ENCODE measurements at regions of chr11 and their contacts with region 1.

Region 1: DNA sequence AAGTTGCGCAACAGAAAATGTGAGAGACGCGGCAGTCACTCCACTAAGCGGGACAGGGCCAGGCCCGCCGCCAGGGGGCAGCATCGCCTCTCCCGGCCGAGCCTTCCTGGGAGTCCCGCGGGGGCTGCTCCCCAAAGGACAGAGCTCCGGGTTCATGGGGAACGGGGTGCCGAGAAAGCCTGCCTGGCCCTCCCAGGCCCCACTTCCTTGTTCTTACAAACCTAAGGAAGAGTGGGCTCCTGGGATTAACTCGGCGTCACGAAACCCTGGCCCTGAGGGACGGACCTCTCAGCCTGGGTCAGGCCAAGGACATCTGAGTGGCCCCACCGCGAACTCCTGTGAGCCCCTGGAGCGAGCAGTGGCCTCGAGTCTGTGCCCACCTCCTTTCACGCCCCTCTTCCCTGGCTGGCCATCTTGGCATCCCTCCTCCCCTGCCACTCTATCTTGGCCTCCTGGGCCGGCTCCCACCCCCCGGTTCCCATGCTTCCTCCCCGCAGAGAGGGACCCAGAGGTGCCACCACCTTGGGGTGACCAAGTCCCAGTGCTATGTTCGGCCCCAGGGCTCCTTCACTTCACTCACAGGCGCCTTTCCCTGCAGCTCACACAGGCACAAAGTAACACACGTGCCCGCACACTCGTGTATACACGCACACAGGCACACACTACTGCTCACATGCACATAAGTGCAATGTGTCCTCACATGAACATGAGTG is 99.9 kb upstream of the FGF3 start:
- DNase-seq: peak; percentile 86
- H3K4me3 ChIP-seq: no peak overlapping the region
- H3K27ac ChIP-seq: peak overlapping the region in 1 of 4 donors; percentile 10
- H3K4me1 ChIP-seq: peaks cover 0 to 24% (median 14%) of the 10 kb centered on the region in 4 donors
- H3K27me3 ChIP-seq: peaks cover 0 to 49% (median 0%) of the 10 kb centered on the region in 3 donors
- CTCF ChIP-seq: peak; percentile 70 to 94 (median 76)
- EP300 ChIP-seq: no peak
- POLR2A ChIP-seq: no peak

Region 2: DNA sequence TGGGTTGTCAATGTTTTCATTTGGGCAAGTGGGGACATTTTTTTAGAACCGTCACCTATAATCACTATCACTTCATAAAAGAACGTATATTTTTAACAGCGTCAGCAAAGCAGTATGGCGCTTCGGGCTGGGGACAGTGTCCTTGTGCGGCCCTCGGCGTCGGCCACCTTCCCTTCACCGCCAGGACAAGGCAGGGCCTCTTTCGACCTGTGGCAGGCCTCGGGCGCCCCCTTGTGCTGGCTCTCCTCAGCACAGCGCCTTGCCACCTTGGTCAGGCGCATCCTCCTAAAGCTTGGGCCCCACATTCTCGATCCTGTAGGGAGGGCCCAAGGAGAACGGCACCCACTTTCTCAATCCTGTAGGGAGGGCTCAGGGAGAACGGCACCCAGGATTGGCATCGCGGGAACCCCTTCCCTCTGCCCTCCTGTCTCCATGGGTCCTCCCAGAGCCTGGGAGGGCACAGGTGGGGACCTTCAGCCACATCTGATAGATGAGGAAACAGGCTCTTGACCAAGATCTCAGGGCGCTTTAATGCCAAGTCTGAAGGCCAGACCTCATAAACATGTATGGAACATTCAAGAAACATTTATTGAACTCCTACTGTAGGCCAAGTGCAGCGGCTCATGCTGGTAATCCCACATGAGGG is 272.5 kb after region 1 on chr11:
- intact Hi-C with region 1: loop called (anchors 1 kb)
- DNase-seq: no peak
- H3K4me3 ChIP-seq: no peak overlapping the region
- H3K27ac ChIP-seq: no peak overlapping the region
- H3K4me1 ChIP-seq: peaks cover 0 to 3% (median 0%) of the 10 kb centered on the region in 4 donors
- H3K27me3 ChIP-seq: no peaks in the 10 kb centered on the region
- CTCF ChIP-seq: peak; percentile 53 to 89 (median 80)
- EP300 ChIP-seq: no peak
- POLR2A ChIP-seq: no peak